ENCODE measurements at regions of chr9 and their contacts with region 1.

Region 1: GRCh38 chr9:129626079-129626624 is at the start of gene NTMT1:
- DNase-seq: peak; percentile 96
- ATAC-seq: peak; percentile 83
- H3K4me3 ChIP-seq: peak within 1 kb of the TSS; percentile 51 to 89 (median 88)
- H3K4me3 Mint-ChIP-seq: peak within 1 kb of the TSS; percentile 84
- H3K27ac ChIP-seq: peak within 1 kb of the TSS; percentile 70 to 99
- H3K27ac Mint-ChIP-seq: peak within 1 kb of the TSS; percentile 83
- H3K4me1 ChIP-seq: peaks cover 29 to 34% of the 10 kb centered on the region in 2 donors
- H3K4me1 Mint-ChIP-seq: peaks cover 50% of the 10 kb centered on the region
- H3K27me3 ChIP-seq: peaks cover 0 to 9% (median 3%) of the 10 kb centered on the region in 4 experiments
- H3K27me3 Mint-ChIP-seq: peaks cover 12% of the 10 kb centered on the region
- CTCF ChIP-seq: no peak
- total RNA-seq, gene NTMT1: 33.6 and 35.3 TPM in 2 replicates

Region 2: GRCh38 chr9:129036241-129036922 is 589.8 kb before region 1 on chr9 and contains the start of gene MIGA2:
- CTCF ChIA-PET with region 1: no interaction called
- POLR2A ChIA-PET with region 1: no interaction called
- intact Hi-C with region 1: loop called (anchors 1 kb)
- DNase-seq: peak; percentile 98
- ATAC-seq: peak; percentile 99
- H3K4me3 ChIP-seq: peak within 1 kb of the TSS; percentile 51 to 98 (median 91)
- H3K4me3 Mint-ChIP-seq: peak within 1 kb of the TSS; percentile 97
- H3K27ac ChIP-seq: peak within 1 kb of the TSS; percentile 9 to 82
- H3K27ac Mint-ChIP-seq: peak within 1 kb of the TSS; percentile 85
- H3K4me1 ChIP-seq: peaks cover 19 to 25% of the 10 kb centered on the region in 2 donors
- H3K4me1 Mint-ChIP-seq: peaks cover 34% of the 10 kb centered on the region
- H3K27me3 ChIP-seq: no peaks in the 10 kb centered on the region
- H3K27me3 Mint-ChIP-seq: no peaks in the 10 kb centered on the region
- CTCF ChIP-seq: no peak
- total RNA-seq, gene MIGA2: 71.6 and 78.1 TPM in 2 replicates

Region 3: DNA sequence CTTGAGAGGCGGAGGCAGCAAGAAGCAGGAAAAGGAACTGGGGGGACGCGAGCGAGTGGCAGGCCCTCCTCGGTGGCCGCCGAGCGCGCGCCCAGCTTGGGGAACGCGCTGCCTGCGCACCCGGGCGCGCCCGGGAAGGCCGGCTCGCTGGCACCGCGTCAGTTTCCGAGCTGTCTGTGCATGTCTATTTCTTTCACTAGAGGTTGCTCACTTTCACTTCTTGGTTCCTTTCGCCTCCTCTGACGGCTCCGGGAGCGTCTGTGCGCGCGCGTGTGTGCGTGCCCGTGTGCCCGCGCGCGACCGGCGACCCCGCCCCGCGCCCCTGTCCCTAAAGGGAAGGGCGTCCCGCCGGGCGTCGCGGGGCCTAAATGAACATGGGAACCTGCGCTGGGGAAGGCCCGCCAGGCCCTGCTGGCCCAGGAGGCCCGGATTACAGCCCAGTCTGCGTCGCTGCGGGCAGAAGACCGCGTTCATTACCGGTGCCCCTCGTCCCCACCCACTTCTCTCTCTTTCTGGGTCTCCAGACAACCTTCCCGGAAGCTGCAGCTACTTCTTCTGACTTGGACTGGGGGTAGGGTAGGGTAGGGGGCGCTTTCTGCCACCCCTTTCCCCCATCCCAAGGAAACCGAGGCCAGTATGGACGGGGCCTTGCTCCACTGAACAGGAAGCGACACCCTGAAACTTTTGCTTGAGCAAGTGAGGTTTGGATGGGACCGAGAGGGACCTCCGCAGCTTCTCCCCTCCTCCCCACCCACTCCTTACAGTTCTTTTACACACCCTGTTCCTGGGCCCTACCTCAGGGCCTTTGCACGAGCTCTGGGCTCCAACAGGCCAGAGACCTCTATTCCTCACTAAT is 242.4 kb before region 1 on chr9:
- CTCF ChIA-PET with region 1: interaction called, 4 read pairs
- POLR2A ChIA-PET with region 1: interaction called, 4 read pairs
- intact Hi-C with region 1: loop called (anchors 1 kb)
- DNase-seq: peak; percentile 94
- ATAC-seq: peak; percentile 88
- H3K4me3 ChIP-seq: peak overlapping the region; percentile 12 to 82 (median 68)
- H3K4me3 Mint-ChIP-seq: peak overlapping the region; percentile 86
- H3K27ac ChIP-seq: peak overlapping the region; percentile 90 to 96
- H3K27ac Mint-ChIP-seq: peak overlapping the region; percentile 97
- H3K4me1 ChIP-seq: peaks cover 17 to 26% of the 10 kb centered on the region in 2 donors
- H3K4me1 Mint-ChIP-seq: peaks cover 21% of the 10 kb centered on the region
- H3K27me3 ChIP-seq: peaks cover 0 to 7% (median 0%) of the 10 kb centered on the region in 4 experiments
- H3K27me3 Mint-ChIP-seq: peaks cover 3% of the 10 kb centered on the region
- CTCF ChIP-seq: no peak

Region 4: GRCh38 chr9:129610473-129611301 is 15.5 kb before region 1 on chr9:
- CTCF ChIA-PET with region 1: interaction called, 77 read pairs
- POLR2A ChIA-PET with region 1: interaction called, 3 read pairs
- intact Hi-C with region 1: loop called (anchors 1 kb)
- DNase-seq: peak; percentile 81
- ATAC-seq: peak; percentile 77
- H3K4me3 ChIP-seq: peak overlapping the region; percentile 21 to 86 (median 59)
- H3K4me3 Mint-ChIP-seq: peak overlapping the region; percentile 79
- H3K27ac ChIP-seq: peak overlapping the region in 1 of 2 donors; percentile 39
- H3K27ac Mint-ChIP-seq: peak overlapping the region; percentile 61
- H3K4me1 ChIP-seq: peaks cover 19 to 21% of the 10 kb centered on the region in 2 donors
- H3K4me1 Mint-ChIP-seq: peaks cover 22% of the 10 kb centered on the region
- H3K27me3 ChIP-seq: peaks cover 0 to 13% (median 0%) of the 10 kb centered on the region in 4 experiments
- H3K27me3 Mint-ChIP-seq: no peaks in the 10 kb centered on the region
- CTCF ChIP-seq: peak; percentile 94

Region 5: DNA sequence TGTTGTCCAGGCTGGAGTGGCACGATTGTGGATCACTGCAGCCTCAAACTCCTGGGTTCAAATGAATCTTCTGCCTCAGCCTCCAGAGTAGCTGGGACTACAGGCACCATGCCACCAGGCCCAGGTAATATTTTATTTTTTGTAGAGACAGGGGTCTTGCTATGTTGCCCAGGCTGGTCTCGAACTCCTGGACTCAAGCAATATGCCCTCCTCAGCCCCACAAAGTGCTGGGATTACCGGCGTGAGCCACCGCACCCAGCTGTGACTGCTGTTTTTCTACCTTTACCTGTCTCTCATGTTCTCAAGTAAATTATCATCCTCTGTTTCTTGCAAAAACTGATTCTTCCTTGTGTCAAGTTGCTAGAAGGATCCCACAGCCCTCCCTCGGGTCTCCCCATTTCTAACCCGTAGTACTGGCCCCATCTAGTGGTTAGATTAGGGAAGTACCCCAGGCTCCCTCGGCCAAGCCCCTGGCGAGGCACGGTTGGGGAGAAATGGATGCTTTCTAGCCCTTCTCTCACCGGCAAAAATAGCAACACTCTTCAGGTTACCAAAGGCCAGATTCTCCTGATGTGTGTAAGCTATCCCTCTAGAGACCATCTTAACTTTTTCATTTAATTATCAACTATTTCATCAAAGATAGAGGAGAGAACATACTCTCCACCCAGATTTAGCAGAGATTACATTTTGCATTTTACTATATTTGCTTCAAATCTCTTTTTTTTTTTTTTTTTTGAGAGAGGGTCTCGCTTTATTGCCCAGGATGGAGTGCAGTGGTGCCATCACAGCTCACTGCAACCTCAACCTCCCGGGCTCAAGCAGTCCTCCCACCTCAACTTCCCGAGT is 157.6 kb after region 1 on chr9:
- CTCF ChIA-PET with region 1: interaction called, 4 read pairs
- POLR2A ChIA-PET with region 1: no interaction called
- intact Hi-C with region 1: loop called (anchors 5 kb)
- DNase-seq: peak; percentile 81
- ATAC-seq: peak; percentile 99
- H3K4me3 ChIP-seq: no peak overlapping the region
- H3K4me3 Mint-ChIP-seq: no peak overlapping the region
- H3K27ac ChIP-seq: no peak overlapping the region
- H3K27ac Mint-ChIP-seq: no peak overlapping the region
- H3K4me1 ChIP-seq: no peaks in the 10 kb centered on the region
- H3K4me1 Mint-ChIP-seq: no peaks in the 10 kb centered on the region
- H3K27me3 ChIP-seq: peaks cover 0 to 19% (median 1%) of the 10 kb centered on the region in 4 experiments
- H3K27me3 Mint-ChIP-seq: peaks cover 19% of the 10 kb centered on the region
- CTCF ChIP-seq: peak; percentile 89